Activated CD4-positive, alpha-beta T cell treated with anti-CD3 and anti-CD28 coated beads for 36 hours (primary cell): ENCODE measurements at regions of chr14 and their contacts with region 1.

Region 1: DNA sequence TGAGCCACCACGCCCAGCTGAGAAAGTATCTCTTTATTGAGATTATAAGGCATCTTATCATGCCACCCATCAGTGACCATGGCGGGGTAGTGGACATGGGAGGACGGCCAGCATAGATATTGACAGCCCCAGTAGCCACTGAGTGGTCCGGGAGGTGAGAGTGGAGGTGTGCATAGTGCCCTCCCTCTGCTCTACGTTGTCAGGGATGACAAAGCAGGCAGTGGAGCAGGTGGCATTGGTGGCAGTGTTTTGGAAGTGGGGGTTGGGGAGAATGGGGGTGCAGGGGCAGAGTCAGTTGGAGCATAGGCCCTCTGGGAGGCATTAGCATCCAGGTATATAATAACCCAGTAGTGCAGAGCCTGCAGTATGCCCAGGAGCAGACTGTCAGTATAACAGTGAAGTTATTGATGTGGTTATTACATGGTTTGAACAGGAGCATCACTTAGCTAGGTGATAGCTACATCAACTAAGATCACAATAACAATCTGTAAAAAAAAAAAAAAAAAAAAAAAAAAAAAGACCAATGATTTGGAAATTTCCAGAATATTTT is 41.1 kb downstream of the GNG2 start:
- DNase-seq: no peak
- ATAC-seq: no peak
- H3K4me3 Mint-ChIP-seq: no peak overlapping the region
- H3K27ac Mint-ChIP-seq: no peak overlapping the region
- H3K4me1 Mint-ChIP-seq: peaks cover 61% of the 10 kb centered on the region
- H3K27me3 Mint-ChIP-seq: no peaks in the 10 kb centered on the region

Region 2: DNA sequence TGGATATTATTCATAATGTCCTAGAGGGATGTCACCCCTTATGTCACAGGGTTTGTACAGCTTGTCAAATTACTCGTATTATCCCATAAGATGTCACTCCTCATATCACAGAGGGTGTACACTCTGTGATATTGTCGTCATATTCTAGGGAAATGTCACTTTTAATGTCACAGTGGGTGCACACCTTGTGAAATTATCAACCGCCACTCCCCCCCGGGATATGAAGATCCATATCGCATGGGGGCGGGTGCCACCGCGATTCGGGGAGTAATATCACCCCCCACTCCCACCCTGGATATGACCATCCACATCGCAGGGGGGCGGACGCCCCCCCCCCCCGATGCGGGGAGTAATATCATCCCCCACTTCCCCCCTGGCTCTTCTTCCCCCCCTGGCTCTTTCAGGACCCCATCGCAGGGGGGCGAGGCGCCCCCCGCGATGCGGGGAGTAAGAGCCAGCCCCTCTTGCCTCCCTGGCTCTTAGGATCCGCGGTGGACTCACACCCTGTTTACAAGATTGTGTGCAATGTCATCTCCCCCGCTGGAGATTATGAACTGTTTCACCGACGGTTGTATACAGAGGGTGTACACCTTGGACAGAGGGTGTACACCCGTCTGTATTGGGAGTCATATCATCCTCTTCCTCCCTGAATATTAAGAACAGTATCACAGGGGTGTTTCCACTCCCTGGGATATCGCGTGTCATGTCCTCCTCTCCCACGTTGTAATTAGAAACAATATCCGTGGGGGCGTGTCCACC is 157.0 kb before region 1 on chr14:
- CTCF ChIA-PET with region 1: no interaction called
- POLR2A ChIA-PET with region 1: no interaction called
- intact Hi-C with region 1: no loop called
- DNase-seq: peak; percentile 57
- ATAC-seq: peak; percentile 75
- H3K4me3 Mint-ChIP-seq: no peak overlapping the region
- H3K27ac Mint-ChIP-seq: no peak overlapping the region
- H3K4me1 Mint-ChIP-seq: no peaks in the 10 kb centered on the region
- H3K27me3 Mint-ChIP-seq: peaks cover 2% of the 10 kb centered on the region

Region 3: GRCh38 chr14:51889851-51890250 is 11.7 kb before region 1 on chr14:
- CTCF ChIA-PET with region 1: interaction called, 21 read pairs
- POLR2A ChIA-PET with region 1: no interaction called
- intact Hi-C with region 1: no loop called
- DNase-seq: no peak
- ATAC-seq: peak; percentile 49
- H3K4me3 Mint-ChIP-seq: no peak overlapping the region
- H3K27ac Mint-ChIP-seq: peak overlapping the region; percentile 76
- H3K4me1 Mint-ChIP-seq: peaks cover 67% of the 10 kb centered on the region
- H3K27me3 Mint-ChIP-seq: no peaks in the 10 kb centered on the region